B cell (primary cell): ENCODE measurements at regions of chr22 and their contacts with region 1.

Region 1: DNA sequence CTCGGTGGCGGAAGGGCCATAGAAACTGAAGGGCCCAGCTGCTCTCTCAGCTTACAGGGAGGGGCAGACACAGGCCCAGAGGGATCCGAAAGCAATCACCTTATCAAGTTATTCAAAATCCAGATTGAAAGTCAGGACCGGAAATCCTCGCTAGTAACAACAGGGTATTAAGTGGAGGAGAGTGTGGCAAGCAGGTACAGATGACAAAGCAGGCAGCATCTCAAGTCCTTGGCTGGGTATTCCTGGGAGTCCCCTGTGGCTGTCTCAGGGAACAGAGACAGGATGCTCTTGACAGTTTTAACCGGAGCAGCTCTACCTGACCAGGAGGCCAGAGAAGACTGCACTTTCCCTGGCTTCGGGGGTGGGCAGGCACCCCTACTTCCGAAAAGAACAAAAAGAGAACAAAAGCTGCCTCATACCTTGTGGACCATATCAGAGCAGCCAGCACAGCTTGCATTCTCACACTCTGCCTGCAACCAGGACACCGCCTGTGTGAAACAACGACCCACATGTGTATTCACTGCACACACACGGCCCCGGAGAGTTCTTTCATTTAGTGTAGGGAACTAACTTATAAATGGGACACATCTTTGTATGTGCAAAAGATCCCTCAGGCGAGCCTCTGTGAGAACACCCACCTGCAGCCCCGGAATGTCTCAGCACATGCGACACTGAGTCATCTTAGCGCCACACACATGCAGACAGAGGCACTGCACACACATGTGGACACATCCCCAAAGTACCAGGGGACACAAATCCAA is 78.3 kb downstream of the MICAL3 start:
- DNase-seq: no peak
- ATAC-seq: peak; percentile 28
- H3K4me3 ChIP-seq: peak overlapping the region in 1 of 5 experiments; percentile 33
- H3K4me3 Mint-ChIP-seq: peak overlapping the region; percentile 5
- H3K27ac ChIP-seq: peak overlapping the region in 1 of 2 donors; percentile 61
- H3K27ac Mint-ChIP-seq: peak overlapping the region; percentile 47
- H3K4me1 ChIP-seq: peaks cover 61 to 85% of the 10 kb centered on the region in 2 donors
- H3K4me1 Mint-ChIP-seq: peaks cover 92% of the 10 kb centered on the region
- H3K27me3 ChIP-seq: no peaks in the 10 kb centered on the region
- H3K27me3 Mint-ChIP-seq: no peaks in the 10 kb centered on the region
- CTCF ChIP-seq: no peak

Region 2: GRCh38 chr22:18012531-18012930 is 66.5 kb after region 1 on chr22:
- CTCF ChIA-PET with region 1: no interaction called
- POLR2A ChIA-PET with region 1: interaction called, 10 read pairs
- intact Hi-C with region 1: no loop called
- DNase-seq: no peak
- ATAC-seq: no peak
- H3K4me3 ChIP-seq: no peak overlapping the region
- H3K4me3 Mint-ChIP-seq: no peak overlapping the region
- H3K27ac ChIP-seq: no peak overlapping the region
- H3K27ac Mint-ChIP-seq: peak overlapping the region; percentile 41
- H3K4me1 ChIP-seq: peaks cover 22 to 28% of the 10 kb centered on the region in 2 donors
- H3K4me1 Mint-ChIP-seq: peaks cover 36% of the 10 kb centered on the region
- H3K27me3 ChIP-seq: no peaks in the 10 kb centered on the region
- H3K27me3 Mint-ChIP-seq: no peaks in the 10 kb centered on the region
- CTCF ChIP-seq: no peak